H1 (cell line): ENCODE measurements at regions of chr3 and their contacts with region 1.

Region 1: GRCh38 chr3:184716622-184717398 is 4.9 kb upstream of the MAGEF1 start:
- DNase-seq: peak in 1 of 2 experiments; percentile 60
- H3K4me3 ChIP-seq: peak overlapping the region in 2 of 4 experiments; percentile 10 to 21; a peak in 2 of 8 replicates
- H3K27ac ChIP-seq: no peak overlapping the region
- H3K4me1 ChIP-seq: peaks cover 9 to 17% (median 13%) of the 10 kb centered on the region in 4 experiments
- H3K27me3 ChIP-seq: no peaks in the 10 kb centered on the region
- CTCF ChIP-seq: peak in 1 of 3 experiments; percentile 8; a peak in 1 of 4 replicates
- EP300 ChIP-seq: no peak
- POLR2A ChIP-seq: no peak
- RAD21 ChIP-seq: peak in 1 of 2 experiments; percentile 21; a peak in 1 of 4 replicates

Region 2: DNA sequence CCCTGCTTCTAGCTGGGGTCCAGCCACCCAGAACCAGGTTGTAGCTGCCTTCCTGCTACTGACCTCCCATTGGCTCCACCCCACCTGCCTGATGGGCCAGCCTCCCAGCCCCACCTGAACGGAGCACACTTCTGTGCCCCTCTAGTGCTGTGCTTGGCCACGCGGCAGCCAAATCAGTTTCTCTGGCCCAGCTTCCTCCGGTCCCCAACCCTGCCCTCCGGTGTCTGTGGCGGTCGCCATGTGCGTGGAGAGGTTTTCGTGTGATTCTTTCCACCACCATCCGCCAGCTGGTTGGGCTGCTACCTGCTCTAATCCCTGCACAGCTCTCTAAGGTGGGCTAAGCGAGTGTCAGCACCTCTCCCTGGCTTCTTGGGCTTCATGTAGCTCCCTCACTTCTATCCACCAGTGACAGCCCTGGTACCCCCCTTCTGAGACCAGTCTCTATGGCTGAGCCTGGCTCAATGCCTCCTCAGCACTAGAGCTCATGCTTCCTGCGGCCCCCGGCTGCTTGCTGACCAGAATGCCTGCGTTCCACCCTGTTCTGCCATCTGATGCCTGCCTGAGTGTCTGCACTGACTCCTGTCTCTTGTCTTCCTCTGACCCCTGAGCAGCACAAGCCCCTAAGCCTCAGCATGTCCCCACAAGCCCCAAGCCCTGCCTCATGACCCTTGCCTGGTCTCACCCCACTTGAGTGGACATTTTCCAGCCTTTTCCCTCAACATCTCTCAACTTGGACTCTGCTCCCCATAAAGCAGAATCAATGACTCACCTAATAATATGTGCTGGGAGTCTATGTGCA is 18.3 kb after region 1 on chr3:
- CTCF ChIA-PET with region 1: interaction called, 17 read pairs
- POLR2A ChIA-PET with region 1: interaction called, 5 read pairs
- DNase-seq: peak in 1 of 2 experiments; percentile 45
- H3K4me3 ChIP-seq: no peak overlapping the region
- H3K27ac ChIP-seq: no peak overlapping the region
- H3K4me1 ChIP-seq: no peaks in the 10 kb centered on the region
- H3K27me3 ChIP-seq: no peaks in the 10 kb centered on the region
- CTCF ChIP-seq: no peak
- EP300 ChIP-seq: no peak
- POLR2A ChIP-seq: no peak
- RAD21 ChIP-seq: no peak